Activated CD4-positive, alpha-beta T cell treated with anti-CD3 and anti-CD28 coated beads for 36 hours (primary cell): ENCODE measurements at regions of chr6 and their contacts with region 1.

Region 1: GRCh38 chr6:37459981-37460800 is 27.2 kb downstream of the CMTR1 start:
- DNase-seq: no peak
- ATAC-seq: no peak
- H3K4me3 Mint-ChIP-seq: no peak overlapping the region
- H3K27ac Mint-ChIP-seq: no peak overlapping the region
- H3K4me1 Mint-ChIP-seq: no peaks in the 10 kb centered on the region
- H3K27me3 Mint-ChIP-seq: no peaks in the 10 kb centered on the region

Region 2: DNA sequence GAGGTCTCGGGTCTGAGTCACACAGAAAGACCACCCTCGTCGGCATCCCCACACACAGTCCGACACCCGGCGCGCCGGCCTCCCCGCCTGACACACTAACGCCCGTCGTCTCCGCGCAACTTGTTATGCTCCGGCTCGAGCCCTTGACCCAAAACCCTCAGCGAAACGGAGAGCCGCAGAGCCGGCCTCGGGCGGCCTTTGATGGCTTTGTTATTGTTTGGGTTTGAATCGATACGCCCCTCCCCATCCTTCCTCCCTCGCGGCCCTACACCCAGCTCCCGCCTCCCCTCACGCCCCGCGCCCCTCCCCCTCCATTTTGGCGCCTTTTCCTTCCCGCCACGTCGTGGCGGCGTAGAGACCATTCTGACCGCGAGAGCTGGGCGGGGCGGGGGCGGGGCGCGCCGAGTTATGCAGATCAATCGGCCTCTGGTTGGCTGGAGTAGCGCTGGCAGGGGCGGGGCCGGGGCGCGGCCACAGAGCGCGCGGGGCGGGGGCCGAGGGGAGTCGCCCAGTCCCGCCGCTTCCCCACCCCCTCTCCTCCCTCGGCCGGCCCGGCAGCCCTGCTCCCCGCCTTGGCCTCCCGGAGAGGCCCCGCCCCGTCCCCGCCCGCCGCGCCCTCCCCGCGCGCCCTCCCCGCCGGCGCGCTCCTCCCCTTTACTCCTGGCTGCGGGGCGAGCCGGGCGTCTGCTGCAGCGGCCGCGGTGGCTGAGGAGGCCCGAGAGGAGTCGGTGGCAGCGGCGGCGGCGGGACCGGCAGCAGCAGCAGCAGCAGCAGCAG is 290.5 kb before region 1 on chr6 and contains the start of gene PIM1:
- CTCF ChIA-PET with region 1: no interaction called
- POLR2A ChIA-PET with region 1: no interaction called
- intact Hi-C with region 1: no loop called
- DNase-seq: peak; percentile 100
- ATAC-seq: peak; percentile 76
- H3K4me3 Mint-ChIP-seq: peak within 1 kb of the TSS; percentile 91
- H3K27ac Mint-ChIP-seq: peak within 1 kb of the TSS; percentile 96
- H3K4me1 Mint-ChIP-seq: peaks cover 39% of the 10 kb centered on the region
- H3K27me3 Mint-ChIP-seq: no peaks in the 10 kb centered on the region
- total RNA-seq, gene PIM1: 137 to 163 TPM

Region 3: DNA sequence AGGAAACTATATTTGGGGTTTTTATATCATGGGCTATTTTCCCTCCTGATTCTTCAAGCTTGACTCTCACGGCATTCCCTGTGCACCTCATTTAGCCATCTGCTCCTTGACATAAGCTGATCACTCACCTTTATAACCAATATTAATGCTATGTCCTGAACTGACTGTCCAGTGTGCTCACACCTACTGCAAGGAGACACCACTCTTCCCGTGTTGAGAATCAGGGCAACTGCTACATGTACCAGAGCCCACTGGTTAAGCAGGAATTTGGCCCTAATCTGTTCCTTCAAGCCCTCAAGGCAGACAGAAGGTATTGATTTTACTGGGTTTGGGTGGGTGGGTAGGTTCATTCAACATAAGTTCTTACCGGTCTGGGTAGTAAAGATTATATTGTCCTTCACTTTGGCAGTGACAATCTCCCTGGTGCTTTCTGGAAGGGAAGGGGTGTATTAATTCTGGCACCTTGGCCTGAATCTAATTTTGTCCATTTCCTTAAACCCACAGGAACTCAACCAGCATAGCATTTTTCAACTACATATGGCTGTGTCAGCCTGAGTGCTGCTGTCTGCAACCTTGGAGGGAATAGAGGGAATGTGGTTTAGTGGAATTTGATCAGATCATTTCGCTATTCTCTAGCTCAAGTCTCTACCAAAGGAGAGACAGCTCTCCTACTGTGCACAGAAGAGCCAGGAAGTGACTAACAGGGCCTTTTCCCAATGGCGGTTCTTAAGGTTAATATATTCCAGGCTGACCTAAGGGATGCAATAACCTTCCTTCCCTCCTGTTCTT is 886.3 kb after region 1 on chr6:
- CTCF ChIA-PET with region 1: no interaction called
- POLR2A ChIA-PET with region 1: no interaction called
- intact Hi-C with region 1: loop called in 1 of 2 experiments (anchors 10 kb)
- DNase-seq: no peak
- ATAC-seq: no peak
- H3K4me3 Mint-ChIP-seq: no peak overlapping the region
- H3K27ac Mint-ChIP-seq: no peak overlapping the region
- H3K4me1 Mint-ChIP-seq: peaks cover 2% of the 10 kb centered on the region
- H3K27me3 Mint-ChIP-seq: no peaks in the 10 kb centered on the region